Ascending aorta (tissue), 2 donors: ENCODE measurements at regions of chr11 and their contacts with region 1.

Region 1: GRCh38 chr11:1827095-1827813 is 7.5 kb upstream of the SYT8 start:
- DNase-seq: peak; percentile 51 to 93
- H3K4me3 ChIP-seq: peak overlapping the region in 1 of 2 donors; percentile 38
- H3K27ac ChIP-seq: peak overlapping the region; percentile 94 to 96
- H3K4me1 ChIP-seq: peaks cover 60 to 76% of the 10 kb centered on the region in 2 donors
- H3K27me3 ChIP-seq: no peaks in the 10 kb centered on the region
- CTCF ChIP-seq: peak in 1 of 3 experiments; percentile 13

Region 2: GRCh38 chr11:1863352-1864216 is 36.3 kb after region 1 on chr11:
- intact Hi-C with region 1: loop called (anchors 1 kb)
- DNase-seq: peak; percentile 81 to 96
- H3K4me3 ChIP-seq: peak overlapping the region; percentile 32 to 34
- H3K27ac ChIP-seq: peak overlapping the region; percentile 86 to 94
- H3K4me1 ChIP-seq: peaks cover 15 to 46% of the 10 kb centered on the region in 2 donors
- H3K27me3 ChIP-seq: no peaks in the 10 kb centered on the region
- CTCF ChIP-seq: no peak